BJ (cell line): ENCODE measurements at regions of chr19 and their contacts with region 1.

Region 1: GRCh38 chr19:46513461-46514236 is 18.0 kb upstream of the PNMA8B start:
- DNase-seq: no peak
- H3K4me3 ChIP-seq: no peak overlapping the region
- H3K27me3 ChIP-seq: peaks cover 3% of the 10 kb centered on the region; the same call in 1 of the 2 replicates
- CTCF ChIP-seq: peak; percentile 95

Region 2: GRCh38 chr19:46283771-46284170 is 229.9 kb before region 1 on chr19:
- CTCF ChIA-PET with region 1: interaction called, 76 read pairs
- POLR2A ChIA-PET with region 1: no interaction called
- DNase-seq: no peak
- H3K4me3 ChIP-seq: no peak overlapping the region
- H3K27me3 ChIP-seq: no peaks in the 10 kb centered on the region
- CTCF ChIP-seq: no peak

Region 3: DNA sequence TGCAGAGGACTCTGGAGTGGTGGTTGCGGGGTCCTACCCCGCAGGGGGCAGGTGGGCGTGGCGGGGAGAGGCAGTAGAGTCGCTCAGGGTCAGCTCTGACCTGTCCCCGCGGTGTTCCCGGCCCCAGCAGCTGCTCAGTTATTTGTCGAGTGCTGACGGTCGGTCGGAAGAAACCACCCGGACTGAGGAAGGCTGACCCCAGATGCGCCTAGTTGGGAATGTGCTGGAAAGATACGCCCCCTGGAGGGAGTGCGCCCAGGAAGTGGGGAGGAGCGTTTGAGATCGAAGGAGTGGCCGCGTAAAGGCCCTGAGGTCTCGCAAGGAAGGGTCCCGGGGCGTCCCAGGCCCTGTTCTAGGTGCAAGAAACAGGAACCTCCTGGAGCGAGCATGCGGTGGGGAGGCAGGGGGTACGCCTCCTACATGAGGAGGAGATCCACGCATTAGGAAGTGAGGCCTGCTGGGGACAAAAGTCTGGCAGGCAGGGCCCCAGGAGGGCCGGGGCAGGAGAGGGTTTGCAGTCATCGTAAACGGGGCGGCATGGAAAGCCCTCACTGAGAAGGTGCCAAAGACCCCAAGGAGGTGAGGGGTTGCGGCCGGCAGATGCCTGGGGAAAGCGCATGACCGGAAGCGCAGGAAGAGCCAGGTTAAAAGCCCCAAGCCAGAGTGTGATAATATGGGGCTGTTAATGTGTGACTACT is 109.4 kb before region 1 on chr19:
- CTCF ChIA-PET with region 1: interaction called, 82 read pairs
- POLR2A ChIA-PET with region 1: no interaction called
- DNase-seq: no peak
- H3K4me3 ChIP-seq: peak overlapping the region; percentile 28
- H3K27me3 ChIP-seq: no peaks in the 10 kb centered on the region; the same call in 1 of the 2 replicates
- CTCF ChIP-seq: peak; percentile 51; the same call in 1 of the 2 replicates

Region 4: GRCh38 chr19:46487802-46488445 is 25.7 kb before region 1 on chr19:
- CTCF ChIA-PET with region 1: interaction called, 45 read pairs
- POLR2A ChIA-PET with region 1: no interaction called
- DNase-seq: no peak
- H3K4me3 ChIP-seq: peak overlapping the region; percentile 20
- H3K27me3 ChIP-seq: peaks cover 9% of the 10 kb centered on the region; the same call in 1 of the 2 replicates
- CTCF ChIP-seq: peak; percentile 95

Region 5: GRCh38 chr19:46529622-46530462 is 16.2 kb after region 1 on chr19:
- CTCF ChIA-PET with region 1: interaction called, 29 read pairs
- POLR2A ChIA-PET with region 1: no interaction called
- DNase-seq: no peak
- H3K4me3 ChIP-seq: no peak overlapping the region
- H3K27me3 ChIP-seq: no peaks in the 10 kb centered on the region; the same call in 1 of the 2 replicates
- CTCF ChIP-seq: peak; percentile 93

Region 6: DNA sequence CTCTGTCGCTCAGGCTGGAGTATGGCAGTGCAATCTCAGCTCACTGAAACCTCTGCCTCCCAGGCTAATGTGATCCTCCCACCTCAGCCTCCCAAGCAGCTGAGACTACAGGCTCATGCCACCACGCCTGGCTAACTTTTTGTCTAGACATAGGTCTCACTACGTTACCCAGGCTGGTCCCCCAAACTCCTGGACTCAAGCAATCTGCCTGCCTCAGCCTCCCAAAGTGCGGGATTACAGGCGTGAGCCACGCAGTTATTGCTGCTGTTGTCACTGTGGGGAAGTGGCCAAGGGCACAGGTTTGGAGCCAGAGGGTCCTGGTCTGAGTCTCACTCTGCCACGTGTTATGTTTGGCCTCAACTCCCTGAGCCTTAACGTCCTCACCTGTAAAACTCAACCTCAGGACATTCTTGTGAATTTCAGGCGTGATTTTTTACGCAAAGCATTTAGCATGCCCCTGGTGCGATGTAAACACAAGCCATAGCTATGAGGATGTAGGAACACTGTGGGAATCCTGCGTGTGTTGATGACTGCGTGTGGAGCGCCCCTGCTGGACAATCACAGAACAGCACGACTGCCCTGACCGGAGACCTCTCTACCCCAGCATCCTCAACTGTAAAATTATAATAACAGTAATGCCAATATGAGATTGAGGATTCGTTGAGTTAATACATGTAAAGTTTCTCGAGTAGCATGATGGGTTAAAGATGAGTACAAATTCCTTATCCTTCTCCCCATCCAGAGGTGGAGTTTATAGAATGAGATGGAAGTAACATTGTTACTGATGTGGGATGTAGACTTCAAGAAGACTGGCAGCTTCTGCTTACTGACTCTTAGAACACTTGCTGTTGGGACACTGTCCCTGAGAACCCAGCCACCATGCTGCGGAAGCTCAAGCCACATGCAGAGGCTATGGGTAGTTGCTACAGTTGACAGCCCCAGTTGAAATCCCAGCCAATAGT is 23.8 kb after region 1 on chr19:
- CTCF ChIA-PET with region 1: interaction called, 42 read pairs
- POLR2A ChIA-PET with region 1: no interaction called
- DNase-seq: no peak
- H3K4me3 ChIP-seq: no peak overlapping the region
- H3K27me3 ChIP-seq: no peaks in the 10 kb centered on the region
- CTCF ChIP-seq: peak; percentile 95

Region 7: GRCh38 chr19:46542428-46543230 is 29.0 kb after region 1 on chr19:
- CTCF ChIA-PET with region 1: interaction called, 42 read pairs
- POLR2A ChIA-PET with region 1: no interaction called
- DNase-seq: peak; percentile 50
- H3K4me3 ChIP-seq: no peak overlapping the region
- H3K27me3 ChIP-seq: no peaks in the 10 kb centered on the region
- CTCF ChIP-seq: peak; percentile 80

Region 8: GRCh38 chr19:46552891-46553290 is 39.2 kb after region 1 on chr19:
- CTCF ChIA-PET with region 1: no interaction called
- POLR2A ChIA-PET with region 1: no interaction called
- DNase-seq: no peak
- H3K4me3 ChIP-seq: no peak overlapping the region
- H3K27me3 ChIP-seq: no peaks in the 10 kb centered on the region; the same call in 1 of the 2 replicates
- CTCF ChIP-seq: no peak